Activated T-helper 2 cell treated with anti-CD3 and anti-CD28 coated beads, Interferon-gamma antibody, Interleukin-2, Interleukin-4, amounts not matched to agents 10 μg/mL and 5 μg/mL and 100 μg/mL, durations not matched to agents 14 hours and 24 hours and 36 hours (primary cell): ENCODE measurements at regions of chr16 and their contacts with region 1.

Region 1: GRCh38 chr16:23640931-23641765 is at the starts of genes DCTN5 and PALB2:
- DNase-seq: peak; percentile 87
- H3K4me3 Mint-ChIP-seq: peak within 1 kb of the TSS; percentile 97
- H3K27ac Mint-ChIP-seq: peak within 1 kb of the TSS; percentile 94
- H3K4me1 Mint-ChIP-seq: peaks cover 22% of the 10 kb centered on the region
- H3K27me3 Mint-ChIP-seq: no peaks in the 10 kb centered on the region
- total RNA-seq, gene DCTN5: 86.5 and 88.4 TPM in 2 replicates
- total RNA-seq, gene PALB2: 25.6 and 30.8 TPM in 2 replicates

Region 2: GRCh38 chr16:23504451-23505179 is 136.5 kb before region 1 on chr16:
- intact Hi-C with region 1: loop called (anchors 10 kb)
- DNase-seq: peak; percentile 68
- H3K4me3 Mint-ChIP-seq: peak overlapping the region; percentile 15
- H3K27ac Mint-ChIP-seq: peak overlapping the region; percentile 77
- H3K4me1 Mint-ChIP-seq: peaks cover 64% of the 10 kb centered on the region
- H3K27me3 Mint-ChIP-seq: no peaks in the 10 kb centered on the region

Region 3: DNA sequence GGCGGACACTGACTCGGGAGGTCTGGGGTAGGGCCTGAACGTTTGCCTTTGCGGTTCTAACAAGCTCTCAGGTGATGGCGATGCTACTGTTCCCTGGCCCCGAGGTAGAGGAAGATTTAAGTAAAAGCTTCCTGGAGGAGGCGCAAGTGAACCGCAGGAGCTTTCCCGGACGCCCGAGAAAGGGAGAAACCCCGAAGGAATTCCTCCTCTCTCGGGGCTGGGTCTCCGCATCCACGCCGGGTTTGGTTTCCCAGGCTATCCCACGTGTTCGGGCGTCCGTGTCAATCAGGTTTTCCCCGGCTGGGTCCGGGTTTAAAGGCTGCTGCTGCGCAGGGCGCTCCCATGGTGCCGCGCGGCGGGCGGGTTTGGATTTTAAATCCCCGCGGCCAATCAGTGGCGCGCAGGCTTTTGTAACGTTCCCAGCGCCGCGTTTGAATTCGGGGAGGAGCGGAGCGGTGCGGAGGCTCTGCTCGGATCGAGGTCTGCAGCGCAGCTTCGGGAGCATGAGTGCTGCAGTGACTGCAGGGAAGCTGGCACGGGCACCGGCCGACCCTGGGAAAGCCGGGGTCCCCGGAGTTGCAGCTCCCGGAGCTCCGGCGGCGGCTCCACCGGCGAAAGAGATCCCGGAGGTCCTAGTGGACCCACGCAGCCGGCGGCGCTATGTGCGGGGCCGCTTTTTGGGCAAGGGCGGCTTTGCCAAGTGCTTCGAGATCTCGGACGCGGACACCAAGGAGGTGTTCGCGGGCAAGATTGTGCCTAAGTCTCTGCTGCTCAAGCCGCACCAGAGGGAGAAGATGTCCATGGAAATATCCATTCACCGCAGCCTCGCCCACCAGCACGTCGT is 37.5 kb after region 1 on chr16 and contains the start of gene PLK1:
- intact Hi-C with region 1: loop called (anchors 5 kb)
- DNase-seq: peak; percentile 81
- H3K4me3 Mint-ChIP-seq: peak within 1 kb of the TSS; percentile 96
- H3K27ac Mint-ChIP-seq: peak within 1 kb of the TSS; percentile 87
- H3K4me1 Mint-ChIP-seq: peaks cover 29% of the 10 kb centered on the region
- H3K27me3 Mint-ChIP-seq: no peaks in the 10 kb centered on the region
- total RNA-seq, gene PLK1: 71.6 and 75.3 TPM in 2 replicates

Region 4: GRCh38 chr16:23712976-23713375 is 71.8 kb after region 1 on chr16 and contains the start of gene ERN2:
- intact Hi-C with region 1: no loop called
- DNase-seq: no peak
- H3K4me3 Mint-ChIP-seq: no peak within 1 kb of the TSS
- H3K27ac Mint-ChIP-seq: no peak within 1 kb of the TSS
- H3K4me1 Mint-ChIP-seq: no peaks in the 10 kb centered on the region
- H3K27me3 Mint-ChIP-seq: peaks cover 32% of the 10 kb centered on the region
- total RNA-seq, gene ERN2: not detected in 2 replicates